Dendritic cell treated with granulocyte-macrophage colony-stimulating factor and Interleukin-4, amounts not matched to agents 40 ng/mL and 50 ng/mL, for 4 days (primary cell): ENCODE measurements at regions of chr9 and their contacts with region 1.

Region 1: DNA sequence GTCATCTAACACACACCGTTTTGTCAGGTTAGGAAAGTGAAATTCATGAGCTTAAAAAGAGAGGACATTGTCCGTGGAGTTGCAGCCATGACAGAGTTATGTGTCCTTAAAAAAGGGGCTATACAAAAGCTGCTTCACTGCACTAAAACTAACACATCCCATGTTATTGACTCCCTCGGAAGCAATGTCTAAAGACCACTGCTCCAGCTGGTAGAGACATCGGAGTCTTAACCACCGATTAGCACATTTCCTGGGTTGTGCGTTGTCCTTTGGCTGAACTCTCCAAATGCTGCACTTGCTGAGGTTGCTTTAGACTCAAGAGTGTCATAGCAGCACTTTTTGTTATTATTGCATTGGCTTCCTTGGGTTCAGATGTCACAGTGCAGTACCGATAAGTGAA is 128.3 kb upstream of the C9orf72 start:
- H3K4me3 Mint-ChIP-seq: peak overlapping the region; percentile 44
- H3K27ac Mint-ChIP-seq: peak overlapping the region; percentile 82
- H3K4me1 Mint-ChIP-seq: peaks cover 30% of the 10 kb centered on the region
- H3K27me3 Mint-ChIP-seq: no peaks in the 10 kb centered on the region

Region 2: DNA sequence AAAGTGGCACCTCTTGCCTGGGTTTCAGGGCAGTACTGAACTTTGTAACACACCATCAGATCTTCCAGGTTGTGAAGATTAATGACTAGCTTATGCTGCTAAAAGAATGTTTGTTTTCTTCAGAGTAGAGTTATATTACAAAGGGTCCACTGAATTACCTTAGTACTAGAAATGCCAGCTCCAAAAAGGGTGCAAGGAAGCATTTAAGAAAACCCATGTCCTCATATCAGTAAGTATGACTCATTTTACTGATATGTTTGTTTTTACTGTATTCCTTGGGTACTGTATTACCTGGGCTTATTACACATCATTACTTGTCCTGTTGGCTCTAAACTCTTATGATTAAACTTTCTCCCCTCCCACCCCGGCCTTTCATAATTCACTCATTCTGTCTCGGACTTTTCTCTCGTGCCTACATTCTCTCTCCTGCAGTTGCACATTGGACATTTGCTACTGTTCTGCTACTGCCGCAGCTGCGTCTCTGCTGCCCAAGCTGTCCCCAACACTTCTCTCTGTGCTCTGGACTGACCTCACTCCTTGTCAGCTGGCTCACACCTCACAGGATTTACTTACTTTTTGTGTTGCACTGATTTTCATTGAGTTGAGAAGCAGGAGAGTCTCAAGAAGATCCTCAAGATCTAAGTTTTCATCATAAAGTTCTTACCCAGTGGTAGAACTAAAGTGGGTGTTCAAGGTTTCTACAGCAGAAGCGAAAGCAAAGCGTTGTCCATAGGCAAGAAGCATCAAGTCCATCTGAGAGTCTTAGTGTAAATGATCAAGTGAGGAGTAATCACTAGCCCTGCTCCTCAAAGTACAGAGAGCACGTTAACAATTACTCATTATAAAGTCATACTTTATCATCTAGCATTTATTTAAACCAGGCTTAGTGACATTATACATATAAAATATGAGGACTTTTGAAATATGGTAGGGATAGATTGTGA is 75.1 kb before region 1 on chr9:
- intact Hi-C with region 1: no loop called
- H3K4me3 Mint-ChIP-seq: no peak overlapping the region
- H3K27ac Mint-ChIP-seq: peak overlapping the region; percentile 5
- H3K4me1 Mint-ChIP-seq: peaks cover 41% of the 10 kb centered on the region
- H3K27me3 Mint-ChIP-seq: no peaks in the 10 kb centered on the region

Region 3: DNA sequence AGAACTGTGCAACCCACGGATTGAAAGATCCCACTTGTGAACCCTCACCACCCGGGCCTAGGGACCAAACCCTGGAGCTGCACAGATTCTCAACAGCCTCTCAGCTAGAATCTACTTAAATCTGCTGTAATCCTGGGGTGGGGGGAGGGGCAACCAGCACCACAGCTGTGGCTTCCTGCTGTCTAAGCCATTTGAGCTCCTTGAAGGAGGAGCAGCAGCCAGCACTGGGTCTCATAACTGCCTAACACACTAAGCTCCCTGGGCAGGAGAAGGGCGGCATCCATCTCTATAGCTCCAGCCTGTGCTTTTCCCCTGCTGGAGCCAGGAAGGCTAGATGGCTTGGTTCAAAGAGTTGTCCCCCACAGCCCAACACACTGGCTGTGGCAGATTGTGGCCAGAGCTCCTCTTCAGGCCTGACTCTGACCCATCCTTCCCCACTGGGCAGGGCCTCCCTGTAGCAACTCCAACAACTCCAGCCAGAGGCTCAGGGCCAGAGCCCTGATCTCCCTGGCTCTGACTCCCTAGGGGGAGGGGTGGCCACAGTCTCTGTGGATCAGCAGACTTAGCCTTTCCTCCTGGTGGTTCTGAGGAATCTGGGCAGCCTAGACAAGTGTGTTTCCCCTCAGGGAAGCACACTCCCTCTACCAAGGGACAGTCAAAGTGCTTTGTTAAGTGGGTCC is 56.3 kb before region 1 on chr9:
- intact Hi-C with region 1: loop called (anchors 10 kb)
- H3K4me3 Mint-ChIP-seq: no peak overlapping the region
- H3K27ac Mint-ChIP-seq: peak overlapping the region; percentile 65
- H3K4me1 Mint-ChIP-seq: peaks cover 46% of the 10 kb centered on the region
- H3K27me3 Mint-ChIP-seq: no peaks in the 10 kb centered on the region

Region 4: DNA sequence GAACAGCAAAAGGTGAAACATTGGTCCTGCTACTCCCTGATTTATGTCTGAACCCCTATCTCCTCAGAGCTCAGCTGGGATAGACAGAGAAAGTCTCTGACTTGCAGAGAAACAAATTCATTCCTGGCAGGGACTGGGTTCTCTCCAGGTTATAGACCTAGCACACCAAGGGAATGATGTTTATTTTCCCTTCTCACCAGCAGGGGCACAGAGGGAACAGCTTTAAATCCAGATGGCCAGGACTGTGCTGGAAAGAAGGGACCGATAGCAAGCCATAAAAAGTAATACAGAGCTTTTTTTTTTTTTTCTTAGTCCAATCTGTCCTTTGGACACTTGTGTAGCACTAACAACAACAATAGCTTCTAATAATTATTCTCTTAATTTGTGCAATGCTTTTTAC is 12.8 kb after region 1 on chr9:
- intact Hi-C with region 1: no loop called
- H3K4me3 Mint-ChIP-seq: no peak overlapping the region
- H3K27ac Mint-ChIP-seq: no peak overlapping the region
- H3K4me1 Mint-ChIP-seq: peaks cover 24% of the 10 kb centered on the region
- H3K27me3 Mint-ChIP-seq: peaks cover 4% of the 10 kb centered on the region

Region 5: GRCh38 chr9:27933210-27934025 is 231.8 kb after region 1 on chr9:
- intact Hi-C with region 1: no loop called
- H3K4me3 Mint-ChIP-seq: no peak overlapping the region
- H3K27ac Mint-ChIP-seq: no peak overlapping the region
- H3K4me1 Mint-ChIP-seq: no peaks in the 10 kb centered on the region
- H3K27me3 Mint-ChIP-seq: no peaks in the 10 kb centered on the region